Ovary (tissue), 10 donors: ENCODE measurements at regions of chr7 and their contacts with region 1.

Region 1: GRCh38 chr7:151631968-151632749 is 112.5 kb upstream of the RHEB start:
- DNase-seq: peak; percentile 82 to 90 (median 87)
- H3K4me3 ChIP-seq: peak overlapping the region; percentile 76
- H3K27ac ChIP-seq: peak overlapping the region; percentile 72 to 82
- H3K4me1 ChIP-seq: no peaks in the 10 kb centered on the region
- H3K27me3 ChIP-seq: no peaks in the 10 kb centered on the region
- CTCF ChIP-seq: peak; percentile 7 to 54 (median 47)
- EP300 ChIP-seq: no peak
- POLR2A ChIP-seq: peak; percentile 1

Region 2: DNA sequence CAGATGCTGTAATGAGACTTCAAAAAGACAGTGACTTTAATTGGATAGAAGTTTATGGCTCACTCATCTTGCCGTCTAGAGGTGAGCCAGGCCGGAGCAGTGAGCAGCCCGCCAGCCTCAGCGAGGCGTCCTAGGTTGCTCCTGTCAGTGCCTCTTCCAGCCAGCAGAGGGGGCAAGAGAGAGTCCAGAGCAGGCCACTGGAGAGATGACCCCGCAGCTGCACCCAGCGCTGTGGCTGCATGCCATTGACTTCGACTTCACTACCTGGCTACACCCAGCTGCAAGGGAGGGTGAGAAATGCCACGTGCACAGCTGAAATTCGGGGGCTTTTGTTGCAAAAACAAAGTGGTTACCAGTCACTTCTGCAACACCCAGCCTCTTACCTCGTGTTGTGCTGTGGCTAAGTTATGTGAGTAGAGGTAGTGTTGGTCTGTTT is 264.0 kb before region 1 on chr7:
- intact Hi-C with region 1: no loop called
- DNase-seq: peak; percentile 81 to 89 (median 84)
- H3K4me3 ChIP-seq: no peak overlapping the region
- H3K27ac ChIP-seq: no peak overlapping the region
- H3K4me1 ChIP-seq: no peaks in the 10 kb centered on the region
- H3K27me3 ChIP-seq: no peaks in the 10 kb centered on the region
- CTCF ChIP-seq: peak; percentile 59 to 93 (median 87)
- EP300 ChIP-seq: no peak
- POLR2A ChIP-seq: no peak

Region 3: DNA sequence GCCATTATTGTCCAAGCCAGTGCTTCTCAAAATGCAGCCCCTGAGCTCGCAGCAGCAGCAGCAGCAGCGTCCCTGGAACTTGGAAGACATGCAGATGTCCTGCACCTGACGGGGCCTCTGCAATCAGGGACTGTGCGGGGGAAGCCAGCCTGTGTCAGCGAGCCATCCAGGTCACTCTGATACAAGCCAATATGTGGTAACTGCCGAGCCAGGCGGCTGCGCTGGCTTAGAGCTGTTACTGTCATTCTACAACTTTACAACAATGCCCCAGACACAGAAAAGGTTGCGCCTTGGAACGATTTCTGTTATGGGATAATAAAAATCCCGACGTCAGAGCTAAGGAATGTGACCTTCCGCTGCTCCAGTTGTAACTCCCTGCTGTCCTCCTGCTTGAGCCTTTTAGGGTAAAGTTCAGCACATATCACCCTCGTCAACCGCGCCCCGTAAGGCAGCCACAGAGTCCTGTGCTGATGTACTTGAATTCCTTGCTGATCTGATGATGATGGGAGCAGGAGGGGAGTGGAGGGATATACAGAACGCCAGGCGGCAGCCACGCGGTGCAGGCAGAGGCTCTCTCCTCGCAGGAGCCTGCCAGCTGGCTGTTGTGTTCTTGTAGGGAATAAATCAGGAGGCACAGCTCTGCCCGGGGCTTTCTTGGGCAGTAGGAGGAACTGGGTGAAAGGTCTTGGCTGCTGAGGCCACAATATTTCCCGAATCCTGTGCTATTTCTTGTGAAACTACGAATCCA is 172.3 kb before region 1 on chr7:
- intact Hi-C with region 1: loop called in 1 of 4 experiments (anchors 5 kb)
- DNase-seq: peak; percentile 84 to 90 (median 87)
- H3K4me3 ChIP-seq: peak overlapping the region; percentile 17
- H3K27ac ChIP-seq: peak overlapping the region; percentile 59 to 80
- H3K4me1 ChIP-seq: peaks cover 13% of the 10 kb centered on the region
- H3K27me3 ChIP-seq: no peaks in the 10 kb centered on the region
- CTCF ChIP-seq: peak in 2 of 3 donors; percentile 22 to 48
- EP300 ChIP-seq: peak; percentile 91
- POLR2A ChIP-seq: peak; percentile 13

Region 4: DNA sequence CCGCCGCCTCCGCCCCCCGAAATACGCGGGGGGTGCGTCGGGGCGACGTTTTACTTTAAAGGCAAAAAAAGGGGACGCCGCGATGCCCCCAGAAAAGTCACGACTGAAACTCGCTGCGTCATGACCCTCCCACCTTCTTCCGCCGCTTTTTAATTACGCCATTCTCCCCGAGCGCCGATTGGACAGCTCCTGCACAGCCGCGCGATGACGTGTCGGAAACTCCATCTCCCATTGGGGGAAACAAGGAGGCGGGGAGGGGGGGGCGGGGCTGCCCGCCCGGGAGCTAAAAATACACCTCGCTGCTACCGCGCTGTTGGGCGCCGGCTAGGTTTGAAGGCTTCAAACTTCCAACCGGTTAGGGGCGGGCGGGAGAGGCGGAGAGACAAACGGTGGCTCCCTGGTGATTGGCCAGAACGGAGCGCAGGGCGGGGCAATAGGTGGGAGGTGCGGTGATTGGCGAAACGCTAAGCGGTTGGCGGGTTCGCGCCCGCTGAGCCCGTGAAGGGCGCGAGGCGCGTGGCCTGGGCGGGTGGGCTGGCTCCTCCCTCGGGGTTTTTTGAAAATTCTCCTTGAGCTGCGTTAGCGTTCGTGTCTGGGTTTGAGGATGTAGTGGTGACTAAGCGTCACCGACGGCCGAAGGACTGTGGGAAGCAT is 112.3 kb before region 1 on chr7 and contains the start of gene RHEB:
- intact Hi-C with region 1: loop called in 1 of 4 experiments (anchors 10 kb)
- DNase-seq: peak; percentile 98 to 99 (median 99)
- H3K4me3 ChIP-seq: peak within 1 kb of the TSS; percentile 72
- H3K27ac ChIP-seq: peak within 1 kb of the TSS; percentile 98 to 100
- H3K4me1 ChIP-seq: peaks cover 14% of the 10 kb centered on the region
- H3K27me3 ChIP-seq: no peaks in the 10 kb centered on the region
- CTCF ChIP-seq: no peak
- EP300 ChIP-seq: no peak
- POLR2A ChIP-seq: peak; percentile 43
- total RNA-seq, gene RHEB: 85.1 to 106 (median 91.8) TPM

Region 5: DNA sequence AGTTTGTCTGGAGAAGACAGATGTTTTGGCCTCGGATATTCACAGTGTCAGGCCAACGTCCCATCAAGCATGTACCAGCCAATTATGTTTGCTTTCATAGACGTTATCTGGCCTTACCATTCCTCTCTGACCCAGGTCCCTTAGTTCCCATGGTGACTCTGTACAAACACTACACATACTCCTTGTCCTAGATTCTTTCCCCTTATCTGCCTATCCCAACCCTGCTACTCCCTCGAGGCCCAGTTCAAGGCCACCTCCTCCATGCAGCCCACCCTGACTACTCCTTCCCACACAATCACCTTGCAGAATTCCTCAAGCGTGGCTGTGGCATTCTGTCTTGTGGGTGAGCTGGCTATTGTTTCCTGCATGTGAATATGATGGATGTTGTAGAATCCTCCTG is 89.5 kb after region 1 on chr7:
- intact Hi-C with region 1: loop called in 1 of 4 experiments (anchors 5 kb)
- DNase-seq: no peak
- H3K4me3 ChIP-seq: no peak overlapping the region
- H3K27ac ChIP-seq: peak overlapping the region in 1 of 2 donors; percentile 6
- H3K4me1 ChIP-seq: peaks cover 19% of the 10 kb centered on the region
- H3K27me3 ChIP-seq: no peaks in the 10 kb centered on the region
- CTCF ChIP-seq: no peak
- EP300 ChIP-seq: no peak
- POLR2A ChIP-seq: no peak

Region 6: GRCh38 chr7:151808400-151809183 is 176.4 kb after region 1 on chr7:
- intact Hi-C with region 1: no loop called
- DNase-seq: no peak
- H3K4me3 ChIP-seq: no peak overlapping the region
- H3K27ac ChIP-seq: no peak overlapping the region
- H3K4me1 ChIP-seq: no peaks in the 10 kb centered on the region
- H3K27me3 ChIP-seq: no peaks in the 10 kb centered on the region
- CTCF ChIP-seq: no peak
- EP300 ChIP-seq: no peak
- POLR2A ChIP-seq: no peak

Region 7: DNA sequence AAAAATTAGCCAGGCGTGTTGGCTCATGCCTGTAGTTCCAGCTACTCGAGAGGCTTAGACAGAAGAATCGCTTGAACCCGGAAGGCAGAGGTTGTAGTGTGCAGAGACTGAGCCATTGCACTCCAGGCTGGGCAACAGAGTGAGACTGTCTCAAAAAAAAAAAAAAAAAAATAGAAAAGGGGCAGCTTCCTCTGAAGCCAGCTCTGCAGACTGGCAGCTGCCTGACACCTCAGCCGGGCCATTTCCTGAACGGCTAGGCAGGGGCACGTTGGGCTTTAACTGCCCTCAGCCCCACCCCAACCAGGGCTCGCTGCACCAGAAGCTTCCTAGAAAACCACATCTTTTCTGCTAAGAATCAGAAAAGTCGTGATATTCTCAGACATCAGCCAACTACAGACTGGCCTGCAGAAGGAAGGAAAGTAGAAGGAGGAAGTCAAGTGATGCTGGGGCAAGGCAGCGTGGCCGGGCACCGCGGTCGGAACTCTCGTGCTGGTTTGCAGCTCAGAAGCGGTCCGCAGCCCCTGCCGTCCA is 206.8 kb after region 1 on chr7:
- intact Hi-C with region 1: no loop called
- DNase-seq: no peak
- H3K4me3 ChIP-seq: no peak overlapping the region
- H3K27ac ChIP-seq: no peak overlapping the region
- H3K4me1 ChIP-seq: peaks cover 4% of the 10 kb centered on the region
- H3K27me3 ChIP-seq: no peaks in the 10 kb centered on the region
- CTCF ChIP-seq: no peak
- EP300 ChIP-seq: no peak
- POLR2A ChIP-seq: no peak